Posterior vena cava (tissue), 2 donors: ENCODE measurements at regions of chrX and their contacts with region 1.

Region 1: GRCh38 chrX:68842781-68843581 is 14.2 kb downstream of the EFNB1 start:
- DNase-seq: no peak

Region 2: DNA sequence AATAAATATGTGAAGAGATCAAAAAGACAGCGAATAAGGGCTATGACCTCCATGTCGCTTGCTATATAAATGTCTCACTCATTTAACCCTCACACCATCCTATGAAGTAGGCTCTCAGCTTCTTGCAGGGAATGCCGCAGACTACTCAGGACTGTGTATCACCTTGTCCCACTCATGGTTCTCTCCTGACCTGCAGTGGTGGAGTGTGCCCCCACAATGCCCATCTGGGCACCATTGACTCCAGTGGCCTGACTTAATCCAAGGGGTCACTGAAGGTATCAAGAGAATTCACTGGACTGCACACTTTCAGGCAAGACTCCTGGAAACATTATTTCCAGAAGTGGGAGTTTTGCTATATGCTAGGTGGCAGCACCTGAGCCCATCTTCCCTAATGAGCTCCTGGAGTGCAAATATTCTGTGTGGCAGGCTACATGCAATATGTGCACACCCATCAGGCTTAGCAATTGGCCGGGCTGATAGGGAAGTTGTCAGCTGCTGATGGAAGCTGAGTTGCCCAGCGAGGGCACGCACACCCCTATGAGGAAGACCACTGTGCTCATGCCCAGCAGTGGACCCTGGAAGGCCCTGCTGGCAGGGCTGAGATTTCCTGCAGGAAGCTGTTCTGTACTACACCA is 22.4 kb before region 1 on chrX:
- intact Hi-C with region 1: no loop called
- DNase-seq: no peak

Region 3: DNA sequence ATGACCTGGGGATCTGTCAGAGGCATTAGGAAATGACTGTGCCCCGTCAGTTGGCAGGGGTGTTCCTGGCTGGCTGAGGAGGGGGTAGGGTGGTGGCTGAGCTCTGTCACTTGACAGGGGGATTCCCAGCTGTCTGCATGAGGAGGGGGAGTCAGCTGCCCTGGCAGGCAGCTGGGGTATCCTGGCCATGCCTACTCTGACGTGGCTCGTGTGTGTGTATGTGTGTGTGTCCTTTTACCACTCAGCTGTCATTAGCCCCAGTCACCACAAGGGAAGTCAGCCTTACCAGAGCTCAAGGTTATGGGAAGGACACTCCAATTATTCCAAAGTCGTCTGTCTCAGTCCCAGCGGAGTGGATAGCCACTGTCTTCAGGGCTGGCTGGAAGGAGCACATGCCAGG is 79.1 kb after region 1 on chrX:
- intact Hi-C with region 1: loop called in 1 of 2 experiments (anchors 5 kb)
- DNase-seq: no peak